Activated T-helper 2 cell treated with anti-CD3 and anti-CD28 coated beads, Interferon-gamma antibody, Interleukin-2, Interleukin-4, amounts not matched to agents 10 μg/mL and 5 μg/mL and 100 μg/mL, durations not matched to agents 14 hours and 24 hours and 36 hours (primary cell): ENCODE measurements at regions of chr5 and their contacts with region 1.

Region 1: GRCh38 chr5:27535031-27535557 is 496.7 kb upstream of the CDH9 start:
- DNase-seq: no peak
- H3K4me3 Mint-ChIP-seq: no peak overlapping the region
- H3K27ac Mint-ChIP-seq: no peak overlapping the region
- H3K4me1 Mint-ChIP-seq: no peaks in the 10 kb centered on the region
- H3K27me3 Mint-ChIP-seq: no peaks in the 10 kb centered on the region

Region 2: DNA sequence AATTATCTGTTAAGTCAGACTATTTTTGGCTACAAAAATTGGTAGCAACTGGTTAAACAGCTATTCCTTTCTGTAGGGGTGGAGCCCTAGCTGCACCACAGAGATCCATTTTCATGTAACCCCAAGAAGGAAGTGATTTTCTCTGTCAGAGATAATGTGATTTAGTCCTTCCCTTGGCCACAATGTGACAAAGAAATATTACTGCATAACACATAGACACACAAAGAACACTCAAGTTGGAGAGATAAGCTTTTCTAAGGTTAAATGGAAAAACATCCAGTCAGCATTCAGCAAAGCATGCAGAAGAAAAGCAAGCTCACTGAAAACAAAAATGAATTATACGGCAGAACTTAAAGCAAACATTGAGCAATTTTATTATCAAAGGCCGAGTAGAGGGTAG is 268.9 kb before region 1 on chr5:
- intact Hi-C with region 1: no loop called
- DNase-seq: no peak
- H3K4me3 Mint-ChIP-seq: no peak overlapping the region
- H3K27ac Mint-ChIP-seq: no peak overlapping the region
- H3K4me1 Mint-ChIP-seq: no peaks in the 10 kb centered on the region
- H3K27me3 Mint-ChIP-seq: no peaks in the 10 kb centered on the region

Region 3: GRCh38 chr5:27568811-27569210 is 33.7 kb after region 1 on chr5:
- intact Hi-C with region 1: loop called (anchors 1 kb)
- DNase-seq: no peak
- H3K4me3 Mint-ChIP-seq: no peak overlapping the region
- H3K27ac Mint-ChIP-seq: no peak overlapping the region
- H3K4me1 Mint-ChIP-seq: no peaks in the 10 kb centered on the region
- H3K27me3 Mint-ChIP-seq: no peaks in the 10 kb centered on the region